HepG2 (cell line): ENCODE measurements at regions of chr4 and their contacts with region 1.

Region 1: GRCh38 chr4:139295206-139295941 is 5.9 kb upstream of the NAA15 start:
- DNase-seq: peak; percentile 82
- ATAC-seq: peak; percentile 95
- H3K4me3 ChIP-seq: peak overlapping the region; percentile 85 to 93 (median 86)
- H3K27ac ChIP-seq: peak overlapping the region; percentile 92
- H3K4me1 ChIP-seq: peaks cover 54% of the 10 kb centered on the region
- H3K27me3 ChIP-seq: no peaks in the 10 kb centered on the region; a peak in 1 of 5 replicates
- CTCF ChIP-seq: peak; percentile 98
- EP300 ChIP-seq: 0 out of 4 replicates have a peak, but pooled peaks have one; percentile 11 to 41
- POLR2A ChIP-seq: peak; percentile 77 to 79; a peak in 3 of 4 replicates
- RAD21 ChIP-seq: peak; percentile 89

Region 2: DNA sequence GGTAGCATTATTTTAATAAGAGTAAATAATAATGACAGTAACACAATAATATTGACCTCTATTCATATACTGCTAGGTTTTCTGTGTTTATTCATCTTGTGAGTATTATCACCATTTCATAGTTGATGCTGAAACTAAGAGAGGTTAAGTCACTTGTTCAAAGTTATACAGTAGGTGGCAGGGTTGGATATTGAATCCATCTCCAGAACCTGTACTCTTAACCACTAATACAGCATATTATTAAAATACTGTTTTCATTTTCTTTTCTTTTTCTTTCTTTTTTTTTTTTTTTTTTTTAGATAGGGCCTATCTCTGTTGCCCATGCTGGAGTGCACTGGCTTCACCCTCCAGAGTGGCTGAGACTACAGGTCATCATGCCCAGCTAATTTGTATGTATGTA is 111.2 kb before region 1 on chr4:
- CTCF ChIA-PET with region 1: no interaction called
- POLR2A ChIA-PET with region 1: interaction called, 37 read pairs
- in situ Hi-C with region 1: loop called (anchors 5 kb)
- intact Hi-C with region 1: no loop called
- DNase-seq: no peak
- ATAC-seq: peak; percentile 38; the same call in 2 of the 3 replicates
- H3K4me3 ChIP-seq: 0 out of 6 replicates have a peak overlapping the region, but pooled peaks of 1 of the 3 experiments have one; percentile 28
- H3K27ac ChIP-seq: no peak overlapping the region
- H3K4me1 ChIP-seq: peaks cover 26% of the 10 kb centered on the region
- H3K27me3 ChIP-seq: no peaks in the 10 kb centered on the region; a peak in 1 of 5 replicates
- CTCF ChIP-seq: peak; percentile 55
- EP300 ChIP-seq: no peak
- POLR2A ChIP-seq: no peak
- RAD21 ChIP-seq: no peak

Region 3: GRCh38 chr4:139229534-139230039 is 65.8 kb before region 1 on chr4:
- CTCF ChIA-PET with region 1: interaction called, 6 read pairs
- POLR2A ChIA-PET with region 1: no interaction called
- in situ Hi-C with region 1: loop called (anchors 5 kb)
- intact Hi-C with region 1: loop called (anchors 1 kb)
- DNase-seq: peak; percentile 50
- ATAC-seq: peak; percentile 76
- H3K4me3 ChIP-seq: no peak overlapping the region
- H3K27ac ChIP-seq: no peak overlapping the region
- H3K4me1 ChIP-seq: peaks cover 14% of the 10 kb centered on the region
- H3K27me3 ChIP-seq: no peaks in the 10 kb centered on the region
- CTCF ChIP-seq: peak; percentile 69
- EP300 ChIP-seq: no peak
- POLR2A ChIP-seq: no peak
- RAD21 ChIP-seq: no peak

Region 4: GRCh38 chr4:139266583-139267257 is 28.7 kb before region 1 on chr4:
- CTCF ChIA-PET with region 1: no interaction called
- POLR2A ChIA-PET with region 1: interaction called, 5 read pairs
- in situ Hi-C with region 1: no loop called
- intact Hi-C with region 1: loop called (anchors 2 kb)
- DNase-seq: peak; percentile 54
- ATAC-seq: peak; percentile 96
- H3K4me3 ChIP-seq: peak overlapping the region; percentile 49 to 69 (median 54); a peak in 5 of 6 replicates
- H3K27ac ChIP-seq: peak overlapping the region; percentile 35
- H3K4me1 ChIP-seq: peaks cover 34% of the 10 kb centered on the region
- H3K27me3 ChIP-seq: no peaks in the 10 kb centered on the region
- CTCF ChIP-seq: no peak
- EP300 ChIP-seq: no peak
- POLR2A ChIP-seq: no peak
- RAD21 ChIP-seq: no peak